GM12878 (cell line): ENCODE measurements at regions of chr20 and their contacts with region 1.

Region 1: DNA sequence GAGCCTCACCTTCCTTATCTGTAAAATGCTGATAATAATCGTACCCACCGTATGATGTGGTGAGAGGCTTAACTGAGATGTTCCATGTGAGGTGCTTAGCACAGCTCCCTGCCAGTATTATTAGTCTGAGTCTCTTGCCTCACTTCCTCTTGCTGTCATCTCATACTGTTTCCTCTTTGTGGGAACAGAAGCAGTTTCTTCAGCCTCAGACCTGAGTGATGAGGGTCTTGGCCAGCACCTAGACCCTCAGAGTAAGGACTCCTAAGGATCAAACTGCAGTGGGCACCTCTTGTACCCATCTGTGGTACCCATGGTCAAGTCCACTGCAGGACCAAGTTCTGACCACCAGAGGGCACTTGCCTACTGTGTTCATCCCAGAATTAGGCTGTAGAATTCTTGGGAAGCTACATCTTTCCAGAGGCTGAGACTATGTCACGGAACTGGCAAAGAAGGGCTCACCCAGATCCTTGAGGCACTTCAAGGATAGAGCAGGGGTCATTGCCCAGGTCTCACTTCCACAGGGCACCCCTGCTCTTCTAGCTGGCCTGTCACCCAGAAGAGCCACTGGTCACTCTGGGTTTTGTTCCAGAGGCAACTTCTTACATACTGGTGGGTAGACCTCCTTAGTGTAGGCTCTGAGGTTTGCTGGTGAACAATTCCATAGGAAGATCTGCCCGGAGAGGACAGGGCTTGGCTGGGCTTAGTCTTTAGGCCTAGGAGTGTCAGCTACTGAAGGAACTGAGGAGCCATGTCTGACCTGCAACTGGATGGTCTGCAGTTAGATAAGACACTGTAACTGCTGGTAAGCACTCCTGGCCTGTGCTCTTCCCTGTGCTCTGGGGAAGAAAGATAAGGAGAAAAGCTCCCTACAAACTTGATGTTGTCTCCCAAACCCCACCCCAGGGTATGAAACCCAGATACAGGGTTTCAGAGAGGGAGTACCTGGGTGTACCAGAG is 20.6 kb upstream of the SGK2 start:
- DNase-seq: no peak
- ATAC-seq: peak; percentile 85
- H3K4me3 ChIP-seq: no peak overlapping the region
- H3K27ac ChIP-seq: no peak overlapping the region
- H3K4me1 ChIP-seq: no peaks in the 10 kb centered on the region
- H3K27me3 ChIP-seq: no peaks in the 10 kb centered on the region; a peak in 2 of 4 replicates
- CTCF ChIP-seq: peak; percentile 83 to 92 (median 90)
- EP300 ChIP-seq: no peak
- POLR2A ChIP-seq: no peak
- RAD21 ChIP-seq: peak; percentile 82

Region 2: GRCh38 chr20:43379578-43379917 is 158.7 kb before region 1 on chr20:
- CTCF ChIA-PET with region 1: no interaction called
- POLR2A ChIA-PET with region 1: no interaction called
- RAD21 ChIA-PET with region 1: no interaction called
- SMC1A ChIA-PET with region 1: no interaction called
- in situ Hi-C with region 1: no loop called
- intact Hi-C with region 1: no loop called
- DNase-seq: no peak
- ATAC-seq: no peak
- H3K4me3 ChIP-seq: no peak overlapping the region
- H3K27ac ChIP-seq: no peak overlapping the region
- H3K4me1 ChIP-seq: no peaks in the 10 kb centered on the region
- H3K27me3 ChIP-seq: no peaks in the 10 kb centered on the region
- CTCF ChIP-seq: no peak
- EP300 ChIP-seq: no peak
- POLR2A ChIP-seq: no peak
- RAD21 ChIP-seq: no peak

Region 3: DNA sequence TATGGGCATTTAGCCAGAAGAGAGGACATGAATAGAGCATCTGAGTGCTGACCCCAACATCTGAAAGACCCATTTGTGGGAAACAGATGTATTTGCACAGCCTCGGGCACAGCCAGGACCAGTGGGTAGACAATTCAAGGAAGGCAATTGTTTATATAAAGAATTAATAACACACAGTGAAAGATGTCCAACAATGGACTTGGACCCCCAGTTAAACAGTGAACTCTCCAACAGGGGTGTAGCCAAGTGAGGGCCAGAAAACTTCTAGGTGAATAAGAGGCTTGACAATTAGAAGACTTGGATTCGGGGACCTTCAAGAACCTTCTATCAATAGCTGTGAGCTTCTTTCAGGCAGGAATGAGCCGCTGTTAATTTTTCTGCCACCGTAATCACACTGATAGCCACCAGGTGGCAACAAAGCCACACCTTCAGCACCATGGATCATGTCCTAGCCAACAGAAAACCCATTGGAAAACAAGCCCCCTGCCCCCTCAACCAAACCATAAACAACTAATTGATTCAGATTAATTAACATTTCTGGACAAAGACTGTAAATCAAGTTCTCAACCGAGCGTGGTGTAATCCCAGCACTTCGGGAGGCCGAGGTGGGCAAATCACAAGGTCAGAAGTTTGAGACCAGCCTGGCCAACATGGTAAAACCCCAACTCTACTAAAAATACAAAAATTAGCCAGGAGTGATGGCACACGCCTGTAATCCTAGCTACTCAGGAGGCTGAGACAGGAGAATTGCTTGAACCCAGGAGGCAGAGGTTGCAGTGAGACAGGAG is 89.3 kb before region 1 on chr20:
- CTCF ChIA-PET with region 1: interaction called, 30 read pairs
- POLR2A ChIA-PET with region 1: no interaction called
- RAD21 ChIA-PET with region 1: interaction called, 3 read pairs
- SMC1A ChIA-PET with region 1: interaction called, 4 read pairs
- in situ Hi-C with region 1: no loop called
- intact Hi-C with region 1: no loop called
- DNase-seq: peak; percentile 13
- ATAC-seq: peak; percentile 89
- H3K4me3 ChIP-seq: no peak overlapping the region
- H3K27ac ChIP-seq: no peak overlapping the region
- H3K4me1 ChIP-seq: no peaks in the 10 kb centered on the region
- H3K27me3 ChIP-seq: no peaks in the 10 kb centered on the region
- CTCF ChIP-seq: peak; percentile 74 to 87 (median 77)
- EP300 ChIP-seq: no peak
- POLR2A ChIP-seq: no peak
- RAD21 ChIP-seq: peak; percentile 90

Region 4: DNA sequence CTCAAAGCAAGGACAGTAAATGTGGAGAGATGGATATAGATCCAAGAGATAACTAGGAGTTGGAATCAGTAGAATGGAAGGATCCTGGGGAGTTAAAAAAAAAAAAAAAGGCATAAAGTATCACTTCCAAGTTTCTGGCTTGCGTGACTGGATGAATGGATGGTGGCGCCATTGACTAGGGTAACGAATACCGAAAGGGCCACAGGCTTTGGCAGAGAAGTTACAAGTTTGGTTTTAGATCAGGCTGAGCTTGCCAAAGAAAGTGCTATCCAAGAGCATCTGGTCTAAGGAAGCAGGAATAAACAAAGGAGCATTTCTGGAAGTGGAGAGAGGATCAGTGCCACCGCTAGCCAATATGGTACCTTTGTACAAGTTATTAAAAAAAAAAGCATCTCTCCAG is 13.2 kb before region 1 on chr20:
- CTCF ChIA-PET with region 1: interaction called, 10 read pairs
- POLR2A ChIA-PET with region 1: no interaction called
- RAD21 ChIA-PET with region 1: no interaction called
- SMC1A ChIA-PET with region 1: interaction called, 4 read pairs
- in situ Hi-C with region 1: no loop called
- intact Hi-C with region 1: no loop called
- DNase-seq: no peak
- ATAC-seq: no peak
- H3K4me3 ChIP-seq: no peak overlapping the region
- H3K27ac ChIP-seq: no peak overlapping the region
- H3K4me1 ChIP-seq: no peaks in the 10 kb centered on the region
- H3K27me3 ChIP-seq: no peaks in the 10 kb centered on the region
- CTCF ChIP-seq: no peak
- EP300 ChIP-seq: no peak
- POLR2A ChIP-seq: no peak
- RAD21 ChIP-seq: no peak

Region 5: DNA sequence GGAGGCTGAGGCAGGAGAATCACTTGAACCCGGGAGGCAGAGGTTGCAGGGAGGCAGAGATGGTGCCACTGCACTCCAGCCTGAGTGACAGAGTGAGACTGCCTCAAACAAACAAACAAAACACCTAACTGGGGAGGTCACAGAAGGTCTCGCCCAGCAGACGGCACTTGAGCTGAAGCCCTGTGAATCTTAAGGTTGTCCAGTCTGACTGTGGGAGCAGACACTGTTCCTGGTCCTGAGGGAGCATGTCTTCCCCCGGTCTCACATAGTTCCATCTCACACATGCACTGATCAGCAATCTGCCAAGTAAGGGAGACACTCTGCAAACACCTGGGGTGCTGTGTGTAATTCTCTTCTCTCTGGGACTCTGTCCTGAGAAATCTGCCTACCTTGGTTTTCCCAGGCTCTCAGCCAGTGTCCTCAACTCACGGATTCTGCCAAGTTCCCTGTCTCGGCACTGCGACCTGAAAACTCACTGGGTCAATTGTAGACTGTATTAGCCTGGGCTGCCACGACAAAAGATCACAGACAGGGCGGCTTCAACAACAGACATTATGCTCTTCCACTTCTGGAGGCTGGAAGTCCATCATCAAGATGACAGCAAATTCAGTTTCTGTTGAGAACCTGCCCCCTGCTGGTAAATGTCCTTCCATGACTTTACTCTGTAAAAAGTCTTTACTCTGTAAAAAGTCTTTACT is 554.5 kb after region 1 on chr20:
- CTCF ChIA-PET with region 1: interaction called, 36 read pairs
- POLR2A ChIA-PET with region 1: no interaction called
- RAD21 ChIA-PET with region 1: interaction called, 7 read pairs
- SMC1A ChIA-PET with region 1: interaction called, 11 read pairs
- in situ Hi-C with region 1: no loop called
- intact Hi-C with region 1: loop called (anchors 1 kb)
- DNase-seq: no peak
- ATAC-seq: peak; percentile 81
- H3K4me3 ChIP-seq: no peak overlapping the region
- H3K27ac ChIP-seq: no peak overlapping the region
- H3K4me1 ChIP-seq: peaks cover 8% of the 10 kb centered on the region
- H3K27me3 ChIP-seq: no peaks in the 10 kb centered on the region
- CTCF ChIP-seq: peak; percentile 49 to 58 (median 53)
- EP300 ChIP-seq: no peak
- POLR2A ChIP-seq: no peak
- RAD21 ChIP-seq: peak; percentile 59

Region 6: GRCh38 chr20:44180814-44181213 is 642.6 kb after region 1 on chr20:
- CTCF ChIA-PET with region 1: no interaction called
- POLR2A ChIA-PET with region 1: no interaction called
- RAD21 ChIA-PET with region 1: no interaction called
- SMC1A ChIA-PET with region 1: no interaction called
- in situ Hi-C with region 1: no loop called
- intact Hi-C with region 1: loop called (anchors 10 kb)
- DNase-seq: no peak
- ATAC-seq: no peak
- H3K4me3 ChIP-seq: no peak overlapping the region
- H3K27ac ChIP-seq: no peak overlapping the region
- H3K4me1 ChIP-seq: no peaks in the 10 kb centered on the region
- H3K27me3 ChIP-seq: no peaks in the 10 kb centered on the region; a peak in 3 of 4 replicates
- CTCF ChIP-seq: no peak
- EP300 ChIP-seq: no peak
- POLR2A ChIP-seq: no peak
- RAD21 ChIP-seq: no peak

Region 7: GRCh38 chr20:44187051-44187762 is 649.0 kb after region 1 on chr20 and contains the start of gene JPH2:
- CTCF ChIA-PET with region 1: interaction called, 15 read pairs
- POLR2A ChIA-PET with region 1: no interaction called
- RAD21 ChIA-PET with region 1: interaction called, 6 read pairs
- SMC1A ChIA-PET with region 1: interaction called, 7 read pairs
- in situ Hi-C with region 1: no loop called
- intact Hi-C with region 1: no loop called
- DNase-seq: no peak
- ATAC-seq: peak; percentile 21; the same call in 2 of the 3 replicates
- H3K4me3 ChIP-seq: no peak within 1 kb of the TSS
- H3K27ac ChIP-seq: no peak within 1 kb of the TSS
- H3K4me1 ChIP-seq: no peaks in the 10 kb centered on the region
- H3K27me3 ChIP-seq: peaks cover 6 to 12% of the 10 kb centered on the region in 2 experiments; a peak in 3 of 4 replicates
- CTCF ChIP-seq: no peak
- EP300 ChIP-seq: no peak
- POLR2A ChIP-seq: no peak
- RAD21 ChIP-seq: no peak
- polyA plus RNA-seq, gene JPH2: not detected